Left ventricle myocardium inferior (tissue), 1 donor: ENCODE measurements at regions of chr10 and their contacts with region 1.

Region 1: DNA sequence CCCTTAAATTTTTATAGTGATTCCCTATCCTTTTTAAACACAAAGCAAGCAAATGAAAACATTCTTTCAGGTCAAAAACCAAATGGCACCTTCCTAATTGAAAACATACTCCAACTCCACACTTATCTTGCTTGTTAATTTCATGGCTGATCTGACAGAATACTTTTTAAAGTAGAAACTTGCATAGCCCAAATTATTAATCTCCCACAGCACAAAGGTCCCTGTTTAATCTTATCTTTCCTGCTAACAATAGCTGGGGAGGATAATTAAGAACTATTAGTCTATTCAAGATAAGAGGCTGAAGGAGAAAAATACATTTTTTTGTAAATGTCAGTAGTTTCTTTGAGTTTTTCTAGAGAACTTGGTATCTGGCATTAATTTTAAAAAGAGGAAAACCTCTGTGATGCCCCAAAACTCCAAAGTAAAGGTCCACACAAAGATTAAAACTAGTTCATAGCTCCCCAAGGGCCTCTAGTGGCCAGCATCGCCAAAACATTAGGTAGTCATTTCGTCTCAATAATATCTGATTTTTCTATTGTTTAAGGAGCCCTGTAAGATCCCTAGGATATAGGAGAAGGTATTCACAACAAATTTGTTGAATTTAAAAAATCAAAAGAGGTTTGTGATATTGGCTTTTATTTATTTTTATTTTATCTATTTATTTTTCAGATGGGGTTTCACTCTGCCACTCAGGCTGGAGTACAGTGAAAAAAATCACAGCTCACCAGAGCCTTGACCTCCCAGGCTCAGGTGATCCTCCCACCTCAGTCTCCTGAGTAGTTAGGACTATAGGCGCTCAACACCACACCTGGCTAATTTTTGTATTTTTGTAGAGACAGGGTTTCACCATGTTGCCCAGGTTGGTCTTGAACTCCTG is 14.7 kb downstream of the CDNF start:
- DNase-seq: peak; percentile 17
- H3K4me3 ChIP-seq: no peak overlapping the region
- H3K27ac ChIP-seq: no peak overlapping the region
- H3K4me1 ChIP-seq: peaks cover 5% of the 10 kb centered on the region
- H3K27me3 ChIP-seq: no peaks in the 10 kb centered on the region
- CTCF ChIP-seq: peak; percentile 65

Region 2: GRCh38 chr10:14499601-14499904 is 323.6 kb before region 1 on chr10:
- intact Hi-C with region 1: loop called (anchors 5 kb)
- DNase-seq: no peak
- H3K4me3 ChIP-seq: no peak overlapping the region
- H3K27ac ChIP-seq: no peak overlapping the region
- H3K4me1 ChIP-seq: peaks cover 5% of the 10 kb centered on the region
- H3K27me3 ChIP-seq: peaks cover 16% of the 10 kb centered on the region
- CTCF ChIP-seq: no peak

Region 3: DNA sequence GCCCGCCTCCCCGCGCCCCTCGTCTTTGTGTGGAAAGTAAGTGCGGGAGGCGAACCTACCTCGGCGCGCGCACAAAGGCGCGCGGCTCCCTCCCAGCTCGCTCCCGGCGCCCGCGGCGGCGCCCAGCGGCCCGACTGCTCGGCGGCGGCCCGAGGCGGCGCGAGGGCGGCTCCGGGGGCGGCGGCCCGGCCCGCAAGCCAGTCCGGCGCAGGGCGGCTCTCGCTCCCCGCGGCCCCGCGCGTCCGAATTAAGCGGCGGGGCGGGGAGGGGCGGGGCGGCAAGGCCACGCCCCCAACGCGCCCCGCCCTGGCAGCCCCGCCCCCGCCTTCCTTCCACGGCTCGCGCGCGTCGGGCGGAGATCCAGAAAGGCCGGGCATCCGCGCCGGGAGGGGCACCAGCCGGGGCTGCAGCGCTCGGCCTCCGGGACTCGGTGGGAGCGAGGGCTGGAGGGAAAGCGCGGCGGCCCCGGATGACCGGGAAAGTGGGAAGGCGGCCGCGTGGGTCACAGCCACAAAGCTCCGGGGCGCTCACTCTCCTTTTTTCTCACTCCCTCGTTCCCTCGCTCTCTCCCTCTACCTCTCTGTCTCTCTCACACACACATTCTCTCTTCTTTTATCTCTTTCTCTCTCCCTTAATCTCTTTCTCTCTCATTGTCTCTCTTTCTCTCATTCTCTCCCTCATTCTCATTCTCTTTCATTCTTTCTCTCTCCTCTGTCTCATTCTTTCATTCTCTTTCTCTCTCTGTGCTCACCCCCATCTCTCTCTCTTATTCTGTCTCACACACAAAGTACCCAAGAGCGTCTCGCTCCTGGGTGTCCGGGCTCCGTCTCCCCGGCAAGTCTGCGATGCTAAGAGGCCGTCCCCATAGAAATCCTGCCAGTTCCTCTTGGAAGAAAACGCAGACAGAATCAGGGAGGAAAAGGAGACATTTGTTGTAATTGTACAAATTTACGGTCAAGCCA is 218.7 kb before region 1 on chr10:
- intact Hi-C with region 1: no loop called
- DNase-seq: peak; percentile 84
- H3K4me3 ChIP-seq: peak overlapping the region; percentile 69
- H3K27ac ChIP-seq: peak overlapping the region; percentile 57
- H3K4me1 ChIP-seq: peaks cover 25% of the 10 kb centered on the region
- H3K27me3 ChIP-seq: no peaks in the 10 kb centered on the region
- CTCF ChIP-seq: no peak

Region 4: DNA sequence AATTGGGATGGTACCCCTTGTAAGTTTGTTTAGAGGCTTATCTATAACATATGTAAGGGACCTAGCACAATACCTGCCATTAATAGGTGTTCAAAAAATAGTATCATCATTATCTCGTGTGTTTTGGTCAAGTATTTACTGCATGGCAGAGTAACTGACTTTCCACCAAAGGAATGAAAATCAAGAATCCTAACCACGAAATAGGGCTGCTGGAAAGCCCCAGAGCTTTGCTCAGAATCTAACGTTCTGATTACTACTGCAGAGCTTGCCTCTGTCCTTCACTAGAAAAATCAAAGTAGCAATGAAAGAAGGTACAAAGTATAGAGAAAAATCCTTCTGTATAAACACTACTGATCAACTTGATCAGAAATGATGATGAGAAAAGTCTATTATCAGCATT is 95.8 kb after region 1 on chr10:
- intact Hi-C with region 1: no loop called
- DNase-seq: no peak
- H3K4me3 ChIP-seq: no peak overlapping the region
- H3K27ac ChIP-seq: no peak overlapping the region
- H3K4me1 ChIP-seq: no peaks in the 10 kb centered on the region
- H3K27me3 ChIP-seq: no peaks in the 10 kb centered on the region
- CTCF ChIP-seq: no peak